ENCODE measurements at regions of chr14 and their contacts with region 1.

Region 1: DNA sequence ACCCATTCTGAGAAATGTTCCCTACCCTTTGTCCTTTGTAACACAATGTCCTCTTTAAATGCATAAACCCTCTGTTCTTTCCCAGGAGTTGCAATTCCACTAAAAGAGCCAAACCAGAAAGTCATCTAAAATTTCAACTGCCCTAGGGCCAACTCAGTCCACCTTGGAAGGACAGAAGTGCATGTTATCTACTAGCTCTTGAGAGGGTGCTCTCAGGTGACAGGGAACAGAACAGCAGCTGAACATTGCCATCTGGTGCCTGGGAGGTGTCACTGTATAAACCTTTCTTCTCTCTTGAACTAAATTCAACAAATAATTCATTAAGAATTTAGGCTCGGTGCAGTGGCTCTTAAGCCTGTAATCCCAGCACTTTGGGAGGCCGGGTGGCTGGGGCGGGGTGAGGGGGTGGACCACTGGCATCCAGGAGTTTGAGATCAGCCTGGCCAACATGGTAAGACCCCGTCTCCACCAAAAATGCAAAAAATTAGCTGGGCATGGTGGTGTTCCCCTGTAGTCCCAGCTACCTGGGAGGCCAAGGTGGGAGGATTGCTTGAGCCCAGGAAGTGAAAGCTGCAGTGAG is 10.3 kb upstream of the FERMT2 start:
- DNase-seq: peak; percentile 88
- ATAC-seq: peak; percentile 90
- H3K4me3 ChIP-seq: peak overlapping the region; percentile 8; the same call in 1 of the 2 replicates
- H3K27ac ChIP-seq: peak overlapping the region; percentile 58
- H3K4me1 ChIP-seq: peaks cover 23% of the 10 kb centered on the region
- H3K27me3 ChIP-seq: no peaks in the 10 kb centered on the region
- CTCF ChIP-seq: peak; percentile 90

Region 2: DNA sequence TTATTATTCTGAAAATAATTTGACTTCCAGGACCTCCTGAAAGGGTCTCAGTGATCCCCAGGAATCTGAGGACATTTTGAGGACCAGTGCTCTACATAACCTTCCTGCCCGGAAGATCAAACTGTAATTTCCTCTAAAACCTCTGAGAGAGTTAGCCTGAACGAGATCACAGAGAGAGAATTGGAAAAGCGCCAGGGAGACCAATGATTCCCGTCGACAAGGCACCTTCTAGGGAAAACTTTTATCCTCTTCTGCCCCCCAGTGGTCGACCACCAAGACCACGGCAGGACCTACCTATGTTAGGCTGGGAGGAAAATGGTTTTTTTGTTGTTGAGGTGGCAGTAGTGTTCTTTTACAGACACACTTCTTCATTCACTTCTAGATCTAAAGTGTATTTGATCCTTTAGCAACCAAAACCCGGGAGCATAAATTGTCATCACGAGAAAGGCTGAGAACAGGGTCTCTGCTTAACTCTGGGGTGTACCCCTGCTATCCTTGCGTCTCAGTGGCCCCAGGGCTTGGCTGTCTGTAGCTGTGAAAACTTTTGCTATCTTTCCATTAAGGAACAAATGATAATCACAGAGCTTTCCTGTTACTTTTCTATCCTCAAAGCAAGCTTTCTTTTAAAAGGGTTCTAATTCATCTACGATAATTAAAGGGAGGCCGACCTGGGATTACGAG is 829.4 kb before region 1 on chr14:
- CTCF ChIA-PET with region 1: no interaction called
- POLR2A ChIA-PET with region 1: no interaction called
- intact Hi-C with region 1: no loop called
- DNase-seq: peak; percentile 95
- ATAC-seq: peak; percentile 98
- H3K4me3 ChIP-seq: no peak overlapping the region
- H3K27ac ChIP-seq: no peak overlapping the region
- H3K4me1 ChIP-seq: peaks cover 6% of the 10 kb centered on the region; the same call in 1 of the 2 replicates
- H3K27me3 ChIP-seq: no peaks in the 10 kb centered on the region
- CTCF ChIP-seq: peak; percentile 92

Region 3: DNA sequence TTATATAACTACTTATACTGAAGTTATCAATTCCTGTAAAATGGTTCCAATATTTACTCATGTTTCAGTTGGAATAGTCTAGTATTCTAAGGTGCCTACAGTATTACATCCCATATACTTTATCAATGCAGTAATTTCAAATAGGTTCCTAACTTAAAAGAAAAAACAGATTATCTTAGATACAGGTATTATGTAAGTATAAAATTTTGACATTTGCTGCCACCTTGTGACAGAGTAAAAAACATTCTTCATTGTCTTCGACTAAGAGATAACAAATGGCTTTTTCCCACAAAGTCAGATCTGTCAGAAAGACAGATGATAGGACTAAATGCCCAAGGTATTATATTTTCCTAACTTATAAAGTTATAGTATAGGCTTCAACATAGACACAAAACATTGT is 487.6 kb before region 1 on chr14:
- CTCF ChIA-PET with region 1: no interaction called
- POLR2A ChIA-PET with region 1: no interaction called
- intact Hi-C with region 1: loop called (anchors 10 kb)
- DNase-seq: peak; percentile 78
- ATAC-seq: peak; percentile 79
- H3K4me3 ChIP-seq: no peak overlapping the region
- H3K27ac ChIP-seq: no peak overlapping the region
- H3K4me1 ChIP-seq: no peaks in the 10 kb centered on the region
- H3K27me3 ChIP-seq: no peaks in the 10 kb centered on the region
- CTCF ChIP-seq: peak; percentile 83

Region 4: DNA sequence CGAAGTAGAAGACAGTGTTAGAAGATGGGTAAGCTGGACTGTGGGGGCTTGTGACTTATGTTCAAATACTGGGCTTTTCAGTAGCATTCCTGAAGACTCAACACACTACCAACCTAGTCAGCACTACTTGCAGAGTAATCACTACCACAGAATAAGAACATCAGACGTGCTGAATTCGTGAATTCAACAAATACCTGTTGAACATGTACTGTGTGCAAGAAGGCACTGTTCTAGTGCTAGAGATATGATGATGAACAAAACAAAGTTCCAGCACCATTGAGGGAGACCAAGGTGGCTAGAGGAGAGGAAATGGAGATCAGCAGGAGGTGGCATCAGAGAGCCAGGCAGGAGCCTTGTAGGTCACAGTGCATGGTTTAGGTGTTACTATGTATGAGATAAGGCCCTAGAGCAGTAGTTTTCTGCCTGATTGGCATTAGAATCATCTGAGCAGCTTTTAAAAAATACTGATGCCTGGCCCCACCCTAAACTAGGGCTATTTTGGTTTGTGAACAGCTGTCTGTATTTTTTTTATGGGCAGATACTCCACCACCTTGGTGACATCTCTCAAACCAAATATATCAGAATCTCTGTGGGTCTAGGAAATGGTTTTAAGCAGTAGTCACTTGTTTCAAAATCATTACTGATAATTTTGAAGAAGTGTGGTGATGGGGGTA is 37.1 kb before region 1 on chr14:
- CTCF ChIA-PET with region 1: interaction called, 3 read pairs
- POLR2A ChIA-PET with region 1: no interaction called
- intact Hi-C with region 1: loop called (anchors 1 kb)
- DNase-seq: no peak
- ATAC-seq: peak; percentile 4; the same call in 1 of the 2 replicates
- H3K4me3 ChIP-seq: no peak overlapping the region
- H3K27ac ChIP-seq: no peak overlapping the region
- H3K4me1 ChIP-seq: peaks cover 69% of the 10 kb centered on the region
- H3K27me3 ChIP-seq: no peaks in the 10 kb centered on the region
- CTCF ChIP-seq: peak; percentile 33; the same call in 1 of the 2 replicates

Region 5: DNA sequence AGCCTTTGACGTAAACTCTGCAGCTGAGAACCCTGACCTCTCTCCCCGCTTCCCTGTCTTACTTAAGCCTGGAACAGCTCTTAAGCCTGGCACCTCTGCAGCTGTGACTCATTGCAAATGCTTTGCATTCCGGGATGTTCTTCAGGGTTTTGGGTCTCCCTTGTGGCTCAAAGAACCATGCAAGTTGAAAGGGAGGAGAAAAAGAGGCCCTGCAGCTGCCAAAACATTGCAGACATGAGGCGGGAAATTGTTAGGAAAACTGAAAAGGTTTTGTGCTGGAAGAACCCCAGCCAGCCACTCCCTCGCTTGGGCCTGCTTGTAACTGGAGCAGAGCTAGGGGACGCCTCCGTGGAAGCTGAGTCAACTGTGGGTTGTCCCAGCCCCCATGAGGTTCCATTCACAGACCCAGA is 49.9 kb after region 1 on chr14:
- CTCF ChIA-PET with region 1: interaction called, 12 read pairs
- POLR2A ChIA-PET with region 1: no interaction called
- intact Hi-C with region 1: no loop called
- DNase-seq: peak; percentile 89
- ATAC-seq: peak; percentile 95
- H3K4me3 ChIP-seq: no peak overlapping the region
- H3K27ac ChIP-seq: 0 out of 2 replicates have a peak overlapping the region, but pooled peaks have one; percentile 3
- H3K4me1 ChIP-seq: peaks cover 15% of the 10 kb centered on the region
- H3K27me3 ChIP-seq: no peaks in the 10 kb centered on the region
- CTCF ChIP-seq: no peak

Region 6: GRCh38 chr14:53032161-53032803 is 71.1 kb after region 1 on chr14:
- CTCF ChIA-PET with region 1: no interaction called
- POLR2A ChIA-PET with region 1: interaction called, 11 read pairs
- intact Hi-C with region 1: no loop called
- DNase-seq: peak; percentile 96
- ATAC-seq: peak; percentile 87
- H3K4me3 ChIP-seq: 0 out of 2 replicates have a peak overlapping the region, but pooled peaks have one; percentile 0
- H3K27ac ChIP-seq: peak overlapping the region; percentile 44
- H3K4me1 ChIP-seq: peaks cover 21% of the 10 kb centered on the region
- H3K27me3 ChIP-seq: no peaks in the 10 kb centered on the region
- CTCF ChIP-seq: no peak

Region 7: GRCh38 chr14:53152890-53153701 is 191.9 kb after region 1 on chr14 and contains the start of gene DDHD1:
- CTCF ChIA-PET with region 1: interaction called, 7 read pairs
- POLR2A ChIA-PET with region 1: no interaction called
- intact Hi-C with region 1: loop called (anchors 10 kb)
- DNase-seq: peak; percentile 67
- ATAC-seq: peak; percentile 70
- H3K4me3 ChIP-seq: peak within 1 kb of the TSS; percentile 97
- H3K27ac ChIP-seq: no peak within 1 kb of the TSS
- H3K4me1 ChIP-seq: peaks cover 17% of the 10 kb centered on the region
- H3K27me3 ChIP-seq: no peaks in the 10 kb centered on the region
- CTCF ChIP-seq: no peak
- total RNA-seq, gene DDHD1: 10.6 and 10.7 TPM in 2 replicates

Measured in PC-3 (cell line).